AG04450 (cell line): ENCODE measurements at regions of chr14 and their contacts with region 1.

Region 1: GRCh38 chr14:56884617-56885016 is 74.3 kb upstream of the OTX2 start:
- DNase-seq: no peak
- H3K4me3 ChIP-seq: no peak overlapping the region
- H3K27ac ChIP-seq: no peak overlapping the region
- H3K27me3 ChIP-seq: no peaks in the 10 kb centered on the region
- CTCF ChIP-seq: no peak

Region 2: DNA sequence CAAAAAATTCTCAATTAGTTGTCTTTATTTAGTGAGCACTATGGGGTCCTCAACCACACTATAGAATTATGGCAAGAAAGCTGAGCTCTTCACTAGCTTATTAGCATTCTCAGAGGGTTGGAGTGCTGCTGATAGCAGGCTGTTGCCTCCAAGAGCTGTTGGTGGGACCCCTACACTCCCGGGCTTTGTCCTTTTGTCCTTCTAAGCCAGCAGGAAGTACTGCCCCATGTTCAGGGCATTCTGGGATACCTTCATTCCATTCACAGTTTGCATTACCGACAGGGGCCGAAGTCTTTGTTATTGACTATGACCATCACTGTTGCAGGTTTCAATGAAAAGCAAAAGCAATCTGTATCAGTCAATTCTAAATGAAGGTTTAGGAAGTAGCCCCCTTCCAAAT is 15.2 kb after region 1 on chr14:
- CTCF ChIA-PET with region 1: interaction called, 3 read pairs
- POLR2A ChIA-PET with region 1: interaction called, 10 read pairs
- DNase-seq: no peak
- H3K4me3 ChIP-seq: no peak overlapping the region
- H3K27ac ChIP-seq: no peak overlapping the region
- H3K27me3 ChIP-seq: no peaks in the 10 kb centered on the region
- CTCF ChIP-seq: no peak